BJ (cell line): ENCODE measurements at regions of chr2 and their contacts with region 1.

Region 1: GRCh38 chr2:234703258-234703657 is 206.4 kb upstream of the ARL4C start:
- DNase-seq: no peak
- H3K4me3 ChIP-seq: no peak overlapping the region
- H3K27me3 ChIP-seq: no peaks in the 10 kb centered on the region
- CTCF ChIP-seq: no peak

Region 2: DNA sequence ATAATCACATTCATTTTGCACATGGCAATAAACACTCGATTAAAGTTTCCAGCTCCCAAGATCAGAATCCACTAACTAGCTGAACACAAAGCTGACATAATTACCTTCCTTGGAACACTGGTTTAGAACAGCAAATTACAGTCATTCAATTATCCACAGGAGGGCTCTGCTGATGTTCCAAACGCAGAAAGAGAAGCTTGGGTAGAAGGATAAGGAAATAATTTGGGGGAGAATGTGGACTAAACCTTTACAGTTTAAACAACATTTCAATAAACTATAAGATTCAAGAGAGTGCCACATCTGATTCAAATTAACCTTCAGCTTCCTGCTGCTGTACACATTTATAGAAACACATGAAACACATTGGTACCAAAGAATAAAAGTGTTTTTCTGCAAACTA is 138.6 kb before region 1 on chr2:
- CTCF ChIA-PET with region 1: no interaction called
- POLR2A ChIA-PET with region 1: no interaction called
- DNase-seq: peak; percentile 57
- H3K4me3 ChIP-seq: no peak overlapping the region
- H3K27me3 ChIP-seq: no peaks in the 10 kb centered on the region
- CTCF ChIP-seq: peak; percentile 53

Region 3: GRCh38 chr2:234632527-234633391 is 70.5 kb before region 1 on chr2:
- CTCF ChIA-PET with region 1: no interaction called
- POLR2A ChIA-PET with region 1: interaction called, 16 read pairs
- DNase-seq: peak; percentile 88
- H3K4me3 ChIP-seq: no peak overlapping the region
- H3K27me3 ChIP-seq: no peaks in the 10 kb centered on the region
- CTCF ChIP-seq: no peak

Region 4: DNA sequence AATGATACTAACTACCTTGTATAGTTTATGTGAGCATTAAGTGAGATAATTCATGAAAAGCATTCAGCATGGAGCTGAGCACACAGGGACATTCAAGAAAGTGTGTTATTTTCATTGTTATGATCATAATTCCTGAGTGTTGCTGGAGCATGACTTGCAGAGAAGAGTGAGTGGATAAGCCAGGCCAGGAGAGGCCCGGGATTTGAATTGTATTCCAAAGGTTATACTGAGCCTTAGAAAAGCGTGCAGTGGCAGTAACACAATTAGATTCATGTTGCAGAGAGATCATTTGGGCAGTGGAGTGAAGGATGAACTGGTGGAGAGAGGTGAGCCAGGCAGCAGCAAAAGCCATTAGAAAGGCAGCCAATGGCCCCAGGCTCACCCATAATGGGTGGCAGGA is 105.6 kb after region 1 on chr2:
- CTCF ChIA-PET with region 1: no interaction called
- POLR2A ChIA-PET with region 1: no interaction called
- DNase-seq: no peak
- H3K4me3 ChIP-seq: no peak overlapping the region
- H3K27me3 ChIP-seq: no peaks in the 10 kb centered on the region; the same call in 1 of the 2 replicates
- CTCF ChIP-seq: no peak